Activated naive CD4-positive, alpha-beta T cell treated with anti-CD3 and anti-CD28 coated beads for 36 hours (primary cell): ENCODE measurements at regions of chr1 and their contacts with region 1.

Region 1: DNA sequence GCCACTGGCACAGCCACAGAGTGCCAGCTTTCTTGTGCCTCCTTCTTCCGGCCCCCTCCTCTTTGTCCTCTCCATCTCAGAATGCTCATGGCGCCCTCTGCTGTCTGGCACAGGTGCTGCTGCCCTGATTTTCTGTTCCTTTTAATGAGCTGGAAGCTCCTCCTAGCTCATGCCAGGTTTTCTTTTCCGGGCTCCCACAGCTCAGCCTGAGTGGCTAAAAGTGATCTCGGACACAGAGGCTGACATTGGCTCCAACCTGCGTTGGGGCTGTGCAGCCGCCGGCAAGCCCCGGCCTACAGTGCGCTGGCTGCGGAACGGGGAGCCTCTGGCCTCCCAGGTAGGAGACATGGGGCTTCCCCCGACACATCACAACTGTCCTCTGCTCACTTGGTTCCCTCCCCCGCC is 18.7 kb downstream of the CNTN2 start:
- DNase-seq: peak; percentile 90
- H3K4me3 Mint-ChIP-seq: no peak overlapping the region
- H3K27ac Mint-ChIP-seq: no peak overlapping the region
- H3K4me1 Mint-ChIP-seq: peaks cover 2% of the 10 kb centered on the region
- H3K27me3 Mint-ChIP-seq: no peaks in the 10 kb centered on the region

Region 2: GRCh38 chr1:204503122-204503912 is 558.4 kb before region 1 on chr1:
- CTCF ChIA-PET with region 1: no interaction called
- intact Hi-C with region 1: no loop called
- DNase-seq: no peak
- H3K4me3 Mint-ChIP-seq: no peak overlapping the region
- H3K27ac Mint-ChIP-seq: no peak overlapping the region
- H3K4me1 Mint-ChIP-seq: peaks cover 25% of the 10 kb centered on the region
- H3K27me3 Mint-ChIP-seq: peaks cover 4% of the 10 kb centered on the region

Region 3: GRCh38 chr1:204975570-204976235 is 86.0 kb before region 1 on chr1:
- CTCF ChIA-PET with region 1: interaction called, 43 read pairs
- intact Hi-C with region 1: loop called (anchors 1 kb)
- DNase-seq: peak; percentile 74
- H3K4me3 Mint-ChIP-seq: no peak overlapping the region
- H3K27ac Mint-ChIP-seq: no peak overlapping the region
- H3K4me1 Mint-ChIP-seq: no peaks in the 10 kb centered on the region
- H3K27me3 Mint-ChIP-seq: peaks cover 2% of the 10 kb centered on the region

Region 4: DNA sequence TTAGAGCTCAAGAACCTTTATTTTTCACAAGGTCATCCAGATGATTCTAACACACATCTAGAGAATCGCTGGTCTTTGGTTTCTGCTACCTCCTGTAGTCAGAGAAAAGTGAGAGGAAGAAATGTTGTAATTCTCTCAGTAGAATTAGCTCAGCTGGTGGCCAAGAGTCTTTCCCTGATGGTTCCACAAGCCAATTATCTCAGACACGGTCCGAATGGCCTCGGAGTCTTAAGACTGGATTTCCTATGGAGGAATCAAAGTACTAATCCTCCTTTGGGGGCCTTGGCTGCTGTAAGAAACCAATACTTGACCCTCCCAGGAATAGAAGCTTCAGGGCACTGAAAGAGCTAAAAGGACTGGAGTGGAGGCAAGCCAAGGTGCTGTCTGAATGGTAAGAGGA is 20.8 kb after region 1 on chr1:
- CTCF ChIA-PET with region 1: interaction called, 12 read pairs
- intact Hi-C with region 1: no loop called
- DNase-seq: no peak
- H3K4me3 Mint-ChIP-seq: no peak overlapping the region
- H3K27ac Mint-ChIP-seq: no peak overlapping the region
- H3K4me1 Mint-ChIP-seq: no peaks in the 10 kb centered on the region
- H3K27me3 Mint-ChIP-seq: no peaks in the 10 kb centered on the region

Region 5: GRCh38 chr1:205211169-205211838 is 149.6 kb after region 1 on chr1 and contains the start of gene DSTYK:
- CTCF ChIA-PET with region 1: no interaction called
- intact Hi-C with region 1: no loop called
- DNase-seq: peak; percentile 97
- H3K4me3 Mint-ChIP-seq: peak within 1 kb of the TSS; percentile 93
- H3K27ac Mint-ChIP-seq: peak within 1 kb of the TSS; percentile 95
- H3K4me1 Mint-ChIP-seq: peaks cover 57% of the 10 kb centered on the region
- H3K27me3 Mint-ChIP-seq: no peaks in the 10 kb centered on the region
- total RNA-seq, gene DSTYK: 10.9 to 11.5 TPM